Activated CD4-positive, alpha-beta T cell treated with anti-CD3 and anti-CD28 coated beads, Interleukin-2, amount 10 ng/mL, durations not matched to agents 24 days and 14 days (primary cell): ENCODE measurements at regions of chr10 and their contacts with region 1.

Region 1: GRCh38 chr10:74176380-74177139 is 25.5 kb downstream of the ADK start:
- DNase-seq: peak; percentile 98
- H3K4me3 Mint-ChIP-seq: peak overlapping the region; percentile 95
- H3K27ac Mint-ChIP-seq: peak overlapping the region; percentile 95
- H3K4me1 Mint-ChIP-seq: peaks cover 31% of the 10 kb centered on the region
- H3K27me3 Mint-ChIP-seq: no peaks in the 10 kb centered on the region

Region 2: GRCh38 chr10:74151056-74151878 is 25.3 kb before region 1 on chr10 and contains the start of gene ADK:
- intact Hi-C with region 1: loop called (anchors 1 kb)
- DNase-seq: peak; percentile 100
- H3K4me3 Mint-ChIP-seq: no peak within 1 kb of the TSS
- H3K27ac Mint-ChIP-seq: no peak within 1 kb of the TSS
- H3K4me1 Mint-ChIP-seq: peaks cover 28% of the 10 kb centered on the region
- H3K27me3 Mint-ChIP-seq: no peaks in the 10 kb centered on the region
- total RNA-seq, gene ADK: 54.8 and 58.3 TPM in 2 replicates

Region 3: DNA sequence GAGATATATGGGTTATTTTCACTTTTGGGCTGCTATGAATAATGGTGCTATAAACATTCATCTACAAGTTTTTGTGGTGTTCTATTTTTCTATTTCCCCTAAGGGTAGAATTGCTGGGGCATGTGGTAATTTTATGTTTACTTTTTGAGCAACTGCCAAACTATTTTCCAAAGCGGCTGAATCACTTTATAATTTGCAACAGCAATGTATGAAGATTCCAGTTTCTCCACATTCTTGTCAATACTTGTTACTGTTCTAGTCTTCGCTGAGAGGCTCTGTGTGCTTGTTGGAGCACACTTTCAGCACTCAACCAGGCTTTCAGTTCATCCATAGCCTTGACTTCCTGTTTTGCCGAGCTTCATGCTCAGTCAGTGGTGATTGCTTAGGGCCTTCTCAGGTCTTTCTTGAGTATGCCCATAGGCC is 13.4 kb after region 1 on chr10:
- intact Hi-C with region 1: loop called (anchors 2 kb)
- DNase-seq: peak; percentile 82
- H3K4me3 Mint-ChIP-seq: peak overlapping the region; percentile 79
- H3K27ac Mint-ChIP-seq: peak overlapping the region; percentile 96
- H3K4me1 Mint-ChIP-seq: peaks cover 45% of the 10 kb centered on the region
- H3K27me3 Mint-ChIP-seq: no peaks in the 10 kb centered on the region

Region 4: GRCh38 chr10:74227697-74228424 is 51.3 kb after region 1 on chr10:
- intact Hi-C with region 1: loop called (anchors 2 kb)
- DNase-seq: no peak
- H3K4me3 Mint-ChIP-seq: peak overlapping the region; percentile 62
- H3K27ac Mint-ChIP-seq: peak overlapping the region; percentile 87
- H3K4me1 Mint-ChIP-seq: peaks cover 28% of the 10 kb centered on the region
- H3K27me3 Mint-ChIP-seq: no peaks in the 10 kb centered on the region

Region 5: DNA sequence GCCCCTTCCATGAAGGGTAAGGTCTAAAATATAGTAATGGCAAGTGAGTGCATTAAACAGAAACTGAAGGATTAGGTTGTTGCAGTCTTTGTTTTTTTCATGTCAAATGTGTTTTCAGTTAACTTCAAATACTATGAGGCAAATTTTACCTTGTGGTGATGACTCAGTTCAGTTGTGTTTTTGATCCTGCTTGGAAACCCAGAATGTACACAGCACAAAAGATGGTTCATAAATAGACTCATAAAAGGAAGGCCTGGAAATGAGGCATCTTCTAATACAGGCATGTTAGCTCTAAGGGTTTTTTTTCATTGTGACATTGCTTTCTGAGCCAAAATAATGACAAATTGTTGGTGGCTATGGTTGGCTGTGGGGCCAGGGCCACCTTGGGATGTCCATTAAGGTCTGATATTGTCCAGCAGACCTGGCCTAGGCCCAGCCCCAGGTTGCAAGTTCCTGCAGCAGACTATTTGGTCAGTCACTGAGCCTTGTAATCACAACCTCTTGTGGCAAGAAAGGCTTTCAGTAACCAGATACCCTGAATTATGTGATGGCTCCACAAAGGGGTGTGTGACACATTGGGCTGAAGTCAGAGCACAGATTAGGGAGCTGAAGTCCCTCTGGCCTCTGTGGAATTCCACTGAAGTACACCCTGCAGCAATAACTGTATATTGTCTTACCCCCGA is 865.9 kb after region 1 on chr10:
- intact Hi-C with region 1: loop called (anchors 10 kb)
- DNase-seq: peak; percentile 66
- H3K4me3 Mint-ChIP-seq: peak overlapping the region; percentile 32
- H3K27ac Mint-ChIP-seq: peak overlapping the region; percentile 86
- H3K4me1 Mint-ChIP-seq: peaks cover 33% of the 10 kb centered on the region
- H3K27me3 Mint-ChIP-seq: no peaks in the 10 kb centered on the region

Region 6: DNA sequence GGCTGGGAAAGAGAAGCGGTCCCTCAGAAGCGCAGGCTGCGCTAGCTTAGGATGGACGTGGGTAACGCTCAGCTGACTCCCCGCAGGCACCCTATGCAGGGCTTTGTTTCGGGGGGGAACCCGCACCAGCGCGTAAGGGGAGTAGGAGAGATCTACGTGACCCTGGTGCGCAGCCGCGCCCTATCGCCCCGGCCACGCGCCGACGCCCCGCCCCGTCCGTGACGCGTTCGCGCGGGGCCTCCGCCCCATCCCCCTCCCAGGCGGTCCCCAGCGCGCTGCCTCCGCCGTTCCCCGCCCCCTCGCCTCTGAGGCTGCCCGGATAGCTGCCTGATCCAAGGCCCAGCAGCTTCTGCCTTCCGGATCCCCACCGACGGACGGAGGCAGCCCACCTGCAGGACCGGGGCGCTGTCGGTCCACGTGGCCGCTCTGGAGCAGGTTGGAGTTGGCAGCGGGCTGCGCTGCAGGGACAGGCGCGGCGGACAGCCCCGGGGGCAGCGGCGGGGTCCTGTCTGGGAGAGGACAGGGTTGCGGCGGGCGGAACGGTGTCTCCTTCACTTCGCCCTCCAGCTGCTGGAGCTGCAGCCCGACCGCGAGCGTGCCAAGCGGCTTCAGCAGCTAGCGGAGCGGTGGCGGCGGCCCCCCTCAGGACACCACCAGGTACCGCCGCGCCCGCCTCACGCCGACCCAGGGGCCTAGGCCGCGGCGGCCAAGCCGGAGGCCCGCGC is 1033.9 kb after region 1 on chr10 and contains the start of gene VDAC2:
- intact Hi-C with region 1: loop called (anchors 1 kb)
- DNase-seq: peak; percentile 99
- H3K4me3 Mint-ChIP-seq: peak within 1 kb of the TSS; percentile 96
- H3K27ac Mint-ChIP-seq: peak within 1 kb of the TSS; percentile 100
- H3K4me1 Mint-ChIP-seq: peaks cover 34% of the 10 kb centered on the region
- H3K27me3 Mint-ChIP-seq: no peaks in the 10 kb centered on the region
- total RNA-seq, gene VDAC2: 245 and 249 TPM in 2 replicates